ENCODE measurements at regions of chr6 and their contacts with region 1.

Region 1: DNA sequence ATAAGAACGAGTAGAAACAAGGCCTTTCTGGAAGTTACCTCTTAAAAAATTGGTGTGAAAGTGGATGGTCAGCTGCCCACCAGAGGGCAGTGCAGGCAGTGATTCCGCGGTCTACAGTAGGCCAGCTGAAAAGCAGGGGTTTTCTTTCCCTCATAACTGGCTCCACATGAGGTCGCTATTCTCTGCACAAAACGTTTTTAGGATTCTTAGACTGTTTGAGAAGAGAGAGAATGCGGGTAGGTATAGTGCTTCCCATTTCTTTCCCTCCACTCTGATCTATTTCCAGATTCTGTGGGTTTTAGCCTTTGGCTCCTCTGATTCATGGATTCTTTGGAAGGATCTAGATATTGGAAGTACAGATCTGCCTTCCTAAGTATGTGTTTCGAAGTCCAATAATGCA is 14.2 kb downstream of the FIG4 start:
- DNase-seq: peak; percentile 75 to 83
- H3K4me3 ChIP-seq: no peak overlapping the region
- H3K27ac ChIP-seq: no peak overlapping the region
- H3K4me1 ChIP-seq: peaks cover 0 to 5% (median 3%) of the 10 kb centered on the region in 4 experiments; a peak in 5 of 7 replicates
- H3K27me3 ChIP-seq: no peaks in the 10 kb centered on the region
- CTCF ChIP-seq: peak; percentile 88 to 99 (median 98)
- EP300 ChIP-seq: no peak
- POLR2A ChIP-seq: no peak
- RAD21 ChIP-seq: peak; percentile 99 to 100

Region 2: GRCh38 chr6:109671733-109672132 is 33.5 kb before region 1 on chr6:
- CTCF ChIA-PET with region 1: no interaction called
- POLR2A ChIA-PET with region 1: no interaction called
- DNase-seq: no peak
- H3K4me3 ChIP-seq: no peak overlapping the region
- H3K27ac ChIP-seq: no peak overlapping the region
- H3K4me1 ChIP-seq: no peaks in the 10 kb centered on the region
- H3K27me3 ChIP-seq: no peaks in the 10 kb centered on the region
- CTCF ChIP-seq: no peak
- EP300 ChIP-seq: no peak
- POLR2A ChIP-seq: no peak
- RAD21 ChIP-seq: no peak

Region 3: DNA sequence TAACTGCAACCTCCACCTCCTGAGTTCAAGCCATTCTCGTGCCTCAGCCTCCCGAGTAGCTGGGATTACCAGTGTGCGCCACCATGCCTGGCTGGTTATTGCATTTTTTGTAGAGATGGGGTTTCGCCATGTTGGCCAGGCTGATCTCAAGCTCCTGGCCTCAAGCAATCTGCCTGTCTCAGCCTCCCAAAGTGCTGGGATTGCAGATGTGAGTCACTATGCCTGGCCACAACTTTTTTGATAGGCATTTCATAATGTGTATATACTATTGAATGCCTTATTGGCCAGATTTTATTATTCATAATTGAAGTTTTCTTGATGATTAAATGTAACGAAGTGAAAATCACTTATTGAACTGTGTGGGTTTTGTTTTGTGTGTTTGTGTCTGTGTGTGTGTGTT is 13.7 kb after region 1 on chr6:
- CTCF ChIA-PET with region 1: interaction called, 15 read pairs
- POLR2A ChIA-PET with region 1: no interaction called
- DNase-seq: no peak
- H3K4me3 ChIP-seq: no peak overlapping the region
- H3K27ac ChIP-seq: no peak overlapping the region
- H3K4me1 ChIP-seq: no peaks in the 10 kb centered on the region
- H3K27me3 ChIP-seq: peaks cover 0 to 1% (median 0%) of the 10 kb centered on the region in 4 experiments; a peak in 1 of 7 replicates
- CTCF ChIP-seq: no peak
- EP300 ChIP-seq: no peak
- POLR2A ChIP-seq: no peak
- RAD21 ChIP-seq: no peak

Region 4: DNA sequence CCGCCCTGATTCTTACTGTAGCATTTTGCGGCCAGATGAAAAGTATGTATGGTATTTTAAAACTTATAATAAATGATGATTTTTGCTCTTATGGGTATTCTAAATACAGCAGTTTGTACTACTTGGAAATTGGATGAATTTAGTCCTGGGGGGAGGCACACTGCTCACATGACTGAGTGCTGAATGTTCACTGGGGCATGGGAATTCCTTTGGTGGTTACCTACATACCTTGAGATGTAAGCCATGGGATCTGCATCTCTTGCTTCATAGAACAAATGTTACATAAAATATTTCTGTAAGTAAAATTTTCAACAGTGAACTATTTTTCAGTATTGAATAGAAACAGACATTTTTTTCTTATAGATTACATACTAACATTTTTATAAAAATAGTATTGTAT is 56.9 kb after region 1 on chr6:
- CTCF ChIA-PET with region 1: no interaction called
- POLR2A ChIA-PET with region 1: no interaction called
- DNase-seq: no peak
- H3K4me3 ChIP-seq: no peak overlapping the region
- H3K27ac ChIP-seq: no peak overlapping the region
- H3K4me1 ChIP-seq: no peaks in the 10 kb centered on the region
- H3K27me3 ChIP-seq: no peaks in the 10 kb centered on the region
- CTCF ChIP-seq: no peak
- EP300 ChIP-seq: no peak
- POLR2A ChIP-seq: no peak
- RAD21 ChIP-seq: no peak

Region 5: DNA sequence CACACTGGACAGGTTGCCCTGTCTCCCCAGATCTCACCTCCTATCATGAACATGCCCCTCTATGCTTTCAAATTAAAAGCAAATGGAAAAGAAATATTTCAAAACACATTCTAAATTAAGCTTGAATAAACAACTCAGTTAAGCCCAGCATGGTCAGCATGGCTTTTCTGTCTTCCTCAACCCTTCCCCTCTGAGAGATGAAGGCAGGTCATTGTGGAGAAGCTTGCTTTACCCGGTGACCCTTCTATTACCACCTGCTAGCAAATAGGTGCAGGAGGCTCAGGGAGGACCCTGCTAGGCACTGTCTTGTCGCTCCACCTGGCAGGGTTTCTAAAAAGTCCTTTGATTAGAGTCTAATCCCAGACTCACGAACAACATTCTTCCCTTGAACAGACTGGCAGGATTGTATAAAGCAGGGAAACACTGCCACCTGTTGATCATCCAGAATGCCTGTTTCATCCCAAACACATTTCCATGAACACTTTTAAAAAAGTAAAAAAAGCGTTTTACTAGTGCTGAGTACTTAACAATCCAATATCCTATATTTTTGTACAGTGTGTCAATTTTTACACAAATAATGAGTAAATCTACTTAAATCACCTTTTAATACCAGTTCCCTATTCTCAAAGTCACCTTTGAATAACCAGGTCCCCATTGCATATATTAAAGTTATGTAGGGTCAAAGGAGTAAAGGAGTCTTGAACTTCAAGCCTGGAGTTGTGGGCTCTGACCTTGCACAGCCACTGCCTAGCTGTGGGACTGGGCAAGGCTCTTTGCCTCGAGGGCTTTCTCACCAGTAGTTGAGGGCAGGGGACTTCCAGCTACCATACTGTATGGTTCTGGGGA is 348.4 kb after region 1 on chr6:
- CTCF ChIA-PET with region 1: interaction called, 49 read pairs
- POLR2A ChIA-PET with region 1: no interaction called
- DNase-seq: no peak
- H3K4me3 ChIP-seq: no peak overlapping the region
- H3K27ac ChIP-seq: no peak overlapping the region
- H3K4me1 ChIP-seq: peaks cover 0 to 3% (median 0%) of the 10 kb centered on the region in 4 experiments; a peak in 1 of 7 replicates
- H3K27me3 ChIP-seq: no peaks in the 10 kb centered on the region
- CTCF ChIP-seq: peak in 2 of 3 experiments; percentile 71 to 78; a peak in 3 of 4 replicates
- EP300 ChIP-seq: no peak
- POLR2A ChIP-seq: no peak
- RAD21 ChIP-seq: peak; percentile 90 to 91